ENCODE measurements at regions of chr2 and their contacts with region 1.

Region 1: GRCh38 chr2:120312861-120313694 is 32.9 kb upstream of the INHBB start:
- DNase-seq: peak; percentile 43 to 82
- ATAC-seq: peak; percentile 65 to 90 (median 80)
- H3K4me3 ChIP-seq: peak overlapping the region; percentile 15
- H3K4me3 Mint-ChIP-seq: peak overlapping the region; percentile 83
- H3K27ac ChIP-seq: no peak overlapping the region
- H3K27ac Mint-ChIP-seq: peak overlapping the region in 1 of 2 donors; percentile 40
- H3K4me1 ChIP-seq: peaks cover 11% of the 10 kb centered on the region
- H3K4me1 Mint-ChIP-seq: peaks cover 11 to 13% of the 10 kb centered on the region in 2 donors
- H3K27me3 ChIP-seq: no peaks in the 10 kb centered on the region
- H3K27me3 Mint-ChIP-seq: peaks cover 14 to 23% of the 10 kb centered on the region in 2 donors
- CTCF ChIP-seq: peak; percentile 80

Region 2: GRCh38 chr2:119641562-119642258 is 671.4 kb before region 1 on chr2:
- intact Hi-C with region 1: loop called (anchors 10 kb)
- DNase-seq: peak; percentile 48 to 86
- ATAC-seq: peak; percentile 87 to 99 (median 94)
- H3K4me3 ChIP-seq: no peak overlapping the region
- H3K4me3 Mint-ChIP-seq: no peak overlapping the region
- H3K27ac ChIP-seq: no peak overlapping the region
- H3K27ac Mint-ChIP-seq: no peak overlapping the region
- H3K4me1 ChIP-seq: no peaks in the 10 kb centered on the region
- H3K4me1 Mint-ChIP-seq: no peaks in the 10 kb centered on the region
- H3K27me3 ChIP-seq: no peaks in the 10 kb centered on the region
- H3K27me3 Mint-ChIP-seq: peaks cover 18 to 28% of the 10 kb centered on the region in 2 donors
- CTCF ChIP-seq: peak; percentile 94

Region 3: DNA sequence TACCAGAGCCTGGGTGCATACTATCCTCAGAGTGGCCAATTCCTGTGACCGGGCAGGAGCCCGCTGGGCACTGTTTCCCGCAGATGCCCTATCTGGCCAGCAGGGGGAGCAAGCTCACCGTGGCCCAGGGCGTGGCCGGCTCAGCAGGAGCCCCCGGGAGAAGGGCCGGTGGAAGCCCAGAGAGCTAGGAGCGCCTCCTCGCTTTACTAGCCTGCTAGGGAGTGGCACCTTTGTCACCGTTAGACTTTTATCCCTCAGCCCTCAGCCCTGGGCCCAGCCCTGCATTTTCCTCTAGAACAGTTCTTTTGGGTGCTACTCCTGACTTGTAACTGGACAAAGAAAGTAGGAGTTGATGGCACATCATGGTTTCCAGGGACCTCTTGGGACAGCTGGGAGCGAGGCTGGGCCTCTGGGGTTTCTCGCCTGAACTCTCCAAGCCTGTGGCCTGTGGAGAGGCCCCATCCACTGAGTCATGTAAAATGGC is 610.1 kb before region 1 on chr2:
- intact Hi-C with region 1: loop called (anchors 1 kb)
- DNase-seq: peak; percentile 58 to 83
- ATAC-seq: peak; percentile 90 to 98 (median 95)
- H3K4me3 ChIP-seq: no peak overlapping the region
- H3K4me3 Mint-ChIP-seq: no peak overlapping the region
- H3K27ac ChIP-seq: no peak overlapping the region
- H3K27ac Mint-ChIP-seq: no peak overlapping the region
- H3K4me1 ChIP-seq: peaks cover 9% of the 10 kb centered on the region
- H3K4me1 Mint-ChIP-seq: peaks cover 0 to 6% of the 10 kb centered on the region in 2 donors
- H3K27me3 ChIP-seq: no peaks in the 10 kb centered on the region
- H3K27me3 Mint-ChIP-seq: peaks cover 6 to 12% of the 10 kb centered on the region in 2 donors
- CTCF ChIP-seq: peak; percentile 95

Region 4: GRCh38 chr2:119753041-119753929 is 559.8 kb before region 1 on chr2:
- intact Hi-C with region 1: loop called (anchors 5 kb)
- DNase-seq: peak in 1 of 2 donors; percentile 80
- ATAC-seq: peak; percentile 66 to 89 (median 86)
- H3K4me3 ChIP-seq: no peak overlapping the region
- H3K4me3 Mint-ChIP-seq: no peak overlapping the region
- H3K27ac ChIP-seq: no peak overlapping the region
- H3K27ac Mint-ChIP-seq: no peak overlapping the region
- H3K4me1 ChIP-seq: no peaks in the 10 kb centered on the region
- H3K4me1 Mint-ChIP-seq: peaks cover 5 to 7% of the 10 kb centered on the region in 2 donors
- H3K27me3 ChIP-seq: no peaks in the 10 kb centered on the region
- H3K27me3 Mint-ChIP-seq: no peaks in the 10 kb centered on the region
- CTCF ChIP-seq: peak; percentile 73

Region 5: GRCh38 chr2:120109186-120110061 is 203.7 kb before region 1 on chr2:
- intact Hi-C with region 1: loop called (anchors 1 kb)
- DNase-seq: peak in 1 of 2 donors; percentile 62
- ATAC-seq: peak; percentile 48 to 82 (median 52)
- H3K4me3 ChIP-seq: no peak overlapping the region
- H3K4me3 Mint-ChIP-seq: peak overlapping the region; percentile 49
- H3K27ac ChIP-seq: peak overlapping the region; percentile 7
- H3K27ac Mint-ChIP-seq: peak overlapping the region; percentile 6 to 21
- H3K4me1 ChIP-seq: no peaks in the 10 kb centered on the region
- H3K4me1 Mint-ChIP-seq: peaks cover 18 to 21% of the 10 kb centered on the region in 2 donors
- H3K27me3 ChIP-seq: no peaks in the 10 kb centered on the region
- H3K27me3 Mint-ChIP-seq: peaks cover 7 to 12% of the 10 kb centered on the region in 2 donors
- CTCF ChIP-seq: no peak